IMR-90 (cell line): ENCODE measurements at regions of chr7 and their contacts with region 1.

Region 1: GRCh38 chr7:135509903-135510602 is at the start of gene CNOT4:
- DNase-seq: peak; percentile 92
- ATAC-seq: peak; percentile 97
- H3K4me3 ChIP-seq: peak within 1 kb of the TSS; percentile 92
- H3K27ac ChIP-seq: peak within 1 kb of the TSS; percentile 96
- H3K4me1 ChIP-seq: no peaks in the 10 kb centered on the region
- H3K27me3 ChIP-seq: no peaks in the 10 kb centered on the region
- CTCF ChIP-seq: no peak
- POLR2A ChIP-seq: peak; percentile 93
- RAD21 ChIP-seq: no peak
- total RNA-seq, gene CNOT4: 8.1 and 10.0 TPM in 2 replicates

Region 2: DNA sequence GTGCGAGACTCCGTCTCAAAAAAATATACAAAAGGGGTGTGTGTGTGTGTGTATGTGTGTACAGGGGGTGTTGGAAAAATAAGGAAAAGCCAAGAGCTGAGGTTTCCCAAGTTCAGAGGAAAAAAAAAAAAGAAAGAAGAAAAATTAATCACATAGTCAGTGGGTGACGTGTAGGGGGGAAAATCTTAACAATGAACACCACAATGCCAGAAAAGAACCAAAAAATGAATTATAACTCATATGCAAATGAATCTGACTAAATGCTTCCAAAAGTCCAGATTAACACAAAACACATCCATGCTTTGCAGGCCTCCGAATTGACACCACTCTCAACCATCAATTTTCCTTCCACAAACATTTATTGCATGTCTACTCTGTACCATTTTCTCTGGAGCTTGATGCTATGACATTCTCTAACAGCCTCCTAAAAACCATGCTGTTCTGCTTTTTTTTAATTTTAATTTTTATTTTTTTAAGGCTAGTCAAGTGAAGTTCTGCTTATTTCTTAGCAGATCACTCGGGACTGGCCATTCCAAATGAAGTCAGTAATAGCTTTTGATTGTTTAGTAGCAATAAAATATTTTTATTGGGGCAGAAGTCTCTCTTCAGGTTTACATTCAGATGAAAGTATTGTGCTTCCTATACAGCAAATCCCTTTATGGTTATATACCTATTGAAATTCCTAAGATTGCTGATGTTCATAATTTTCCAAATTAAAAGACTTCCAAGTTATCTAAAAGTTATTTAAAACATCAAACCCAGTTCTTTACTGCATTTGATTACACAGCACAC is 133.9 kb before region 1 on chr7:
- CTCF ChIA-PET with region 1: no interaction called
- POLR2A ChIA-PET with region 1: no interaction called
- dilution Hi-C with region 1: no loop called
- in situ Hi-C with region 1: no loop called
- intact Hi-C with region 1: no loop called
- DNase-seq: no peak
- ATAC-seq: no peak
- H3K4me3 ChIP-seq: no peak overlapping the region
- H3K27ac ChIP-seq: no peak overlapping the region
- H3K4me1 ChIP-seq: no peaks in the 10 kb centered on the region
- H3K27me3 ChIP-seq: no peaks in the 10 kb centered on the region
- CTCF ChIP-seq: no peak
- POLR2A ChIP-seq: no peak
- RAD21 ChIP-seq: no peak

Region 3: DNA sequence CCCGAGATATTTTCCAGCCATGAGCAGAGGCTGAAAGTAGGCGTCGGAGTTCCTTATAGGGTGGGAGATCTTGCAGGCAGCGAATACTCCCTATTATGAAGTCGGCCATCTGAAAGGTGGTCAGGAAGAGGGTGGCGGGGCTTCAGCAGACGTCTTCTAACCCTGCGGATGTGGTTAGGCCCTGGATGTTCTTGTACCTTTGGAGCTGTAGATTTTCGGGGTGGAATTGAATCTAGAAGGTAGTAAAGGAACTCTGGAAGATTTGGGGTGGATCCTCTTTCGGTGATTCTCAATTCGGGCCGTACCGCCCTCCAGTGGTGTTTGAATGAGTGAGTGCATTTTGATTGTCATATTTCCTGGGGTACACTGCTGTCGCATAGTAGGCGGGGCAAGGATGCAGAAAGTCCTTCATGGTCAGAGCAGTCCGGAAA is 48.3 kb after region 1 on chr7:
- CTCF ChIA-PET with region 1: no interaction called
- POLR2A ChIA-PET with region 1: no interaction called
- dilution Hi-C with region 1: no loop called
- in situ Hi-C with region 1: no loop called
- intact Hi-C with region 1: loop called (anchors 2 kb)
- DNase-seq: peak; percentile 40
- ATAC-seq: peak; percentile 56
- H3K4me3 ChIP-seq: peak overlapping the region; percentile 69
- H3K27ac ChIP-seq: peak overlapping the region; percentile 79
- H3K4me1 ChIP-seq: no peaks in the 10 kb centered on the region
- H3K27me3 ChIP-seq: no peaks in the 10 kb centered on the region
- CTCF ChIP-seq: peak; percentile 59
- POLR2A ChIP-seq: no peak
- RAD21 ChIP-seq: peak; percentile 52

Region 4: DNA sequence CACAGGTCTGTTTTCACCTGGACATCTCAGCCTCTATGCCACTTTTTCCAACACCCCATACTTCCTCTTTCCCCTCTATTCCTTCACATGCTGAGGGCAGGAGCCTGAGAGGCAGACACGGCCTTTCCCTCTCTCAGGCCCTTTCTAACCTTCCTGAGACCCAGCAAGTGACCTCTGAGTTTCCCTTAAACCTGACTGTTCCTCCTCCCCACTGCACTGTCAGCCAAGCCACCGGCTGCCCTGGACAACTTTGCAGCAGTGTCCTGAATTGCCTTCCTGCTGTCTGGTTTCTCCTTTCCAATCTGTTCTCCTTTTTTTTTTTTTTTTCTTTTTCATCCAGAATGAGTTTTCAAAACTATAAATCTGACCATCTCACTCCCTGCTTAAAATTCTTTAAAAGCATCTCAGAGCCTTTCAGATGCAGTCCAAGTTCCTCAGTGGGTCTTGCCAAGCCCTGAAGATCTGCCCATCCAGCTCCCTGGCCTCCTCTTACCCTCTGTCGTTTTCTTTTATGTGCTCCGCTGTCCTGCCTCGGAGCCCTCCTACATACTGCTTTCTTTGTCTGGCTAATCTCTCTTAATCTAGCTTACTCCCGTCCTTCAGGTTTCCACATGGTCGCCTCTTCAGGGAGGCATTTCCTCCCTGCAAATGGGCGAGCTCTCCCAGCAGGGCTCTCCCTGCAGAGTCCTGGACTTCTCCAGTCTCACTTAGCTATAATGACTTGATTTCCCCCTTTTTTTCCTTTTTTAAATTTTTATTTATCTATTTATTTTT is 187.4 kb after region 1 on chr7:
- CTCF ChIA-PET with region 1: no interaction called
- POLR2A ChIA-PET with region 1: no interaction called
- dilution Hi-C with region 1: no loop called
- in situ Hi-C with region 1: no loop called
- intact Hi-C with region 1: no loop called
- DNase-seq: no peak
- ATAC-seq: no peak
- H3K4me3 ChIP-seq: no peak overlapping the region
- H3K27ac ChIP-seq: no peak overlapping the region
- H3K4me1 ChIP-seq: no peaks in the 10 kb centered on the region
- H3K27me3 ChIP-seq: no peaks in the 10 kb centered on the region
- CTCF ChIP-seq: no peak
- POLR2A ChIP-seq: no peak
- RAD21 ChIP-seq: no peak